Mammary epithelial cell (primary cell): ENCODE measurements at regions of chr21 and their contacts with region 1.

Region 1: DNA sequence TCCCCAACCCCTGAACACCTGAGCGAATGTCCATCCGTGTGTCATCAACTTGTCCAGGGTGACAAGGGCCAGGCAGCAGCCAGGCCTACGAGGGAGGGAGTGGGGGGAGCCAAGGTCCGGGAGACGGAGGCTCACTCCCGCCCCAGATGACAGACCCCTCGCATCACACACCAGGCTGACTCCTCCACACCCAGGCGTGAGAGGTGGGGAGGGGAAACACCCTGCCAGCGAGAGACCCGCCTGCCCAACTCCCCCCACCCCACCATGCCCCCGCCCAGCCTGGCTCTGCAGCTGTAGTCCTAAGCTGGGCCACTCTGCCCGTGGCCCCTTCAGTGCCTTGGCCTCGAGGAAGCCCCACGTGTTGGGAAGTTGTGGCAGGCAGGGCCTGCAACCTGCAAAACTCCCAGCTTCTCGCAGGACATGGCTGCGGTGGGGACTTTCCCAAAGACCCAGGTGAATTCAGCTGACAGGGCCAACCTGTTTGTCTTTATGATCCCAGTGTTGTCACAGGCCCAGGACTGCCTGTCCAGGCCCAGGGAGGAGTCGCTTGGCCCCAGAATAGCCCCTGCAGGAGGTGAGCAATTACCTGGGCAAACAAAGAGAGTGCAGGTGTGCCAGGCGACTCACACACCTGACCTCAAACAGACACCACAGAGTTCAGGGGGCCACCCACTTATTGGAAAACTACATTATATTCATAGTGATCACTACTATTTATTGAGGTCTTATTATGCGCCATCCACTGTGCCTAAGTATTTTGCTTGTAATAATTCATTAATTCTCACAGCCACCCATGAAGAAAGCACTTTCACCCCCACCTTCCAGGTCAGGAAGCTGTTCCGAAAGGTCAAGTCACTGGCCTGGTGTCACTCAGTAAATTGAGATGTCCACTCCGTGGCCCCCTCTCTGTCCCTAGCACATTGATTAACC is 62.7 kb downstream of the RIPK4 start:
- DNase-seq: peak; percentile 88
- H3K4me3 ChIP-seq: no peak overlapping the region
- H3K27ac ChIP-seq: no peak overlapping the region
- H3K4me1 ChIP-seq: peaks cover 23% of the 10 kb centered on the region
- H3K27me3 ChIP-seq: no peaks in the 10 kb centered on the region
- CTCF ChIP-seq: no peak

Region 2: GRCh38 chr21:41691205-41692194 is 12.6 kb before region 1 on chr21:
- CTCF ChIA-PET with region 1: no interaction called
- dilution Hi-C with region 1: no loop called
- in situ Hi-C with region 1: no loop called
- intact Hi-C with region 1: loop called (anchors 2 kb)
- DNase-seq: no peak
- H3K4me3 ChIP-seq: no peak overlapping the region
- H3K27ac ChIP-seq: no peak overlapping the region
- H3K4me1 ChIP-seq: peaks cover 3% of the 10 kb centered on the region
- H3K27me3 ChIP-seq: no peaks in the 10 kb centered on the region
- CTCF ChIP-seq: no peak

Region 3: DNA sequence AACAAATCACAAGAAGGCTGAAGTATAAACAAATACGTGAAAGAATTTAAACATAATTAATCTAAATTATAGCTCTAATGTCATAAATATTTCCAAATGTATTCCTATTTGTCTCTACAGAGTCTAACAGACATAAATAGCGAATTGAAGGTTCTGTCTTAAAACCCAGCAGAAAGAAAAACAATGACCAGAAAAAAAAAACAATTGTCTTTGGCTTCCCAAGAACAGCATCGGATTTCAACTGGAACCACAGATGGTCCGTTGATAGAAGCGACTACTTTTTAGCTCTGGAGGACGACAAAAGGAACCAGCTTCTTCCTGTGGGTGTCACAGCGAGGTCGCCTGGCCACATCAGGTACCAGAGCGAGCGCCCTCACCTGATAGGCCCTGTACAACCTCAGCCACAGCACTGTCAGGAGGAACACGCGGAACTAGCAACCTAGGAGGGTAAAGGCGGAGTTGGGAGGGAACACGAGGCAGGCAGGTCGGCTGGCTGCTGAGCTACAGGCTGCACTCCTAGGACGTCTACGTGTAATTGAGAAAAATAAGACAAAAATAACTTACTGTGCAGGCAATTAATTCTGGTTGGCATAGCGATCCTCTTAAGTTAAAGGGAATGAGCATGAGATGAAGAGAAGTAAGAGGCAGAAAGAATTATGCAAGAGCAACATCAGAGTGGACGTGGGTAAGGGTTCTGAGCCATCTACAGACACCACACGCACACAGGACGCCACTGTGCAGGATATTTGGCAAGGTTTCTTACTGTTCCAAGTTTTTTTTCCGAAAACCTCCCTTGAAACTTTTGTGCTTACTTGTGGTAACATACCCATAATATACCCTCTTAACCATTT is 191.7 kb after region 1 on chr21:
- CTCF ChIA-PET with region 1: no interaction called
- dilution Hi-C with region 1: no loop called
- in situ Hi-C with region 1: no loop called
- intact Hi-C with region 1: no loop called
- DNase-seq: no peak
- H3K4me3 ChIP-seq: no peak overlapping the region
- H3K27ac ChIP-seq: no peak overlapping the region
- H3K4me1 ChIP-seq: no peaks in the 10 kb centered on the region
- H3K27me3 ChIP-seq: no peaks in the 10 kb centered on the region
- CTCF ChIP-seq: no peak